ENCODE measurements at regions of chr3 and their contacts with region 1.

Region 1: DNA sequence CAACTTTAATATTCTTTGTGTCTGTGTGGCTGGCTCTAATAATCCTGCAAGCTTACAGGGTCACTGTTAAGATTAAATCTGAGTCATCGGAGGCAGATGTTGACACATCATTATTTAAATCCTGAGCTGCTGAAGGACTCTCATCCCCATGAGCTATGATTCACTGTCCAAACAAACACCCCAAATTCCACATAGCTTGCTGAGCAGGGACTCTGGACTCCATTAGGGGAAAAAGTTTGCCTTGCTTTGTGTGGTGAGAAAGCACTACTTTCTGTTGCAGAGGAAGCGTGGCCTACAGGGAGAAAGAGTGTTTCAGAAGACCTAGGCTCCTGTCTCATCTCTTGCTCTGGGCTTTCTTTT is 213.7 kb downstream of the PDCD6IP start:
- DNase-seq: peak; percentile 7
- ATAC-seq: peak; percentile 60
- H3K4me3 ChIP-seq: no peak overlapping the region
- H3K27ac ChIP-seq: no peak overlapping the region
- H3K4me1 ChIP-seq: peaks cover 4 to 8% of the 10 kb centered on the region in 2 experiments; a peak in 3 of 4 replicates
- H3K27me3 ChIP-seq: no peaks in the 10 kb centered on the region; the same call in 1 of the 2 replicates
- CTCF ChIP-seq: no peak
- POLR2A ChIP-seq: no peak
- RAD21 ChIP-seq: no peak

Region 2: DNA sequence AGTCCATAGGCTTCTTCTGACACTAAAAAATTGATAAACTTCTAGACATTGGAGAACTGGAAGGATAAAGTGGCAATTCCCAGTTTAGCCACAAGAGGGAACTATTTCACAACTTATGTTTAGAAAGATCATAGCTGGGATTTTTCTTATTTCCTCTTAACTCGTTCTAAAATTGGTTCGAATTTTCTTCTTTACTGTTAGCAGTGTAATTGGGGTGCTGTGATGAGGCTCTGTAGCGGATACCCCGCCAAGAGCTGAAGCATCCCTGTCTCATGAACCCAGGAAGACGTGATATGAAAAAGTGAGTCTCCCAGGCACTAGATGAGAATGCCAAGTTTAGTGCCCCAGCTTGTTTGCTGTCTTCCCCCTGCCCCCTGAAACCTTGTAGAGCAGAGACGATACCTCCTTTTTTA is 128.5 kb before region 1 on chr3:
- CTCF ChIA-PET with region 1: interaction called, 18 read pairs
- POLR2A ChIA-PET with region 1: interaction called, 4 read pairs
- RAD21 ChIA-PET with region 1: no interaction called
- intact Hi-C with region 1: loop called (anchors 2 kb)
- DNase-seq: peak; percentile 23
- ATAC-seq: peak; percentile 55
- H3K4me3 ChIP-seq: no peak overlapping the region
- H3K27ac ChIP-seq: no peak overlapping the region
- H3K4me1 ChIP-seq: no peaks in the 10 kb centered on the region
- H3K27me3 ChIP-seq: peaks cover 11% of the 10 kb centered on the region; the same call in 1 of the 2 replicates
- CTCF ChIP-seq: peak; percentile 57 to 93 (median 59); a peak in 5 of 6 replicates
- POLR2A ChIP-seq: no peak
- RAD21 ChIP-seq: peak; percentile 79